WTC11 (cell line): ENCODE measurements at regions of chr12 and their contacts with region 1.

Region 1: GRCh38 chr12:53159195-53159839 is 21.2 kb upstream of the ZNF740 start:
- DNase-seq: peak; percentile 95
- ATAC-seq: peak; percentile 95
- H3K4me3 Mint-ChIP-seq: peak overlapping the region; percentile 50
- H3K27ac Mint-ChIP-seq: no peak overlapping the region
- H3K4me1 Mint-ChIP-seq: peaks cover 5% of the 10 kb centered on the region
- H3K27me3 Mint-ChIP-seq: peaks cover 63% of the 10 kb centered on the region
- CTCF ChIP-seq: peak; percentile 97

Region 2: DNA sequence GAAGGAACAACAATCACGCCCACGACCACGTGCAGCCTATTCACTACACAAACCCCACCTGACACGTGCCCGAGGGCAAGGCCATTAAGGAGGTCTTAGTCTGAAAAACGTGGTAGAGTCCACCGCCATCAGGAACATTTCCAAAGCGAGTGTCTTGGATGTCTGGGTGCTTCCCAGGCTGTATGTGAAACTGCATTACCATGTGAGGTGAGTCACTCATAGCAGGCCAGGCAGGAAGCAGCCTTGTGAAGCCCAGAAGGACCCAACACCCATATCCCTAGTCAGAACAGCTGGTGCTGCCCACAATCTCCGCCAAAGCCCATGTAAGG is 321.9 kb before region 1 on chr12:
- CTCF ChIA-PET with region 1: no interaction called
- POLR2A ChIA-PET with region 1: no interaction called
- DNase-seq: no peak
- ATAC-seq: no peak
- H3K4me3 Mint-ChIP-seq: no peak overlapping the region
- H3K27ac Mint-ChIP-seq: no peak overlapping the region
- H3K4me1 Mint-ChIP-seq: no peaks in the 10 kb centered on the region
- H3K27me3 Mint-ChIP-seq: peaks cover 5% of the 10 kb centered on the region; the same call in 1 of the 2 replicates
- CTCF ChIP-seq: no peak

Region 3: DNA sequence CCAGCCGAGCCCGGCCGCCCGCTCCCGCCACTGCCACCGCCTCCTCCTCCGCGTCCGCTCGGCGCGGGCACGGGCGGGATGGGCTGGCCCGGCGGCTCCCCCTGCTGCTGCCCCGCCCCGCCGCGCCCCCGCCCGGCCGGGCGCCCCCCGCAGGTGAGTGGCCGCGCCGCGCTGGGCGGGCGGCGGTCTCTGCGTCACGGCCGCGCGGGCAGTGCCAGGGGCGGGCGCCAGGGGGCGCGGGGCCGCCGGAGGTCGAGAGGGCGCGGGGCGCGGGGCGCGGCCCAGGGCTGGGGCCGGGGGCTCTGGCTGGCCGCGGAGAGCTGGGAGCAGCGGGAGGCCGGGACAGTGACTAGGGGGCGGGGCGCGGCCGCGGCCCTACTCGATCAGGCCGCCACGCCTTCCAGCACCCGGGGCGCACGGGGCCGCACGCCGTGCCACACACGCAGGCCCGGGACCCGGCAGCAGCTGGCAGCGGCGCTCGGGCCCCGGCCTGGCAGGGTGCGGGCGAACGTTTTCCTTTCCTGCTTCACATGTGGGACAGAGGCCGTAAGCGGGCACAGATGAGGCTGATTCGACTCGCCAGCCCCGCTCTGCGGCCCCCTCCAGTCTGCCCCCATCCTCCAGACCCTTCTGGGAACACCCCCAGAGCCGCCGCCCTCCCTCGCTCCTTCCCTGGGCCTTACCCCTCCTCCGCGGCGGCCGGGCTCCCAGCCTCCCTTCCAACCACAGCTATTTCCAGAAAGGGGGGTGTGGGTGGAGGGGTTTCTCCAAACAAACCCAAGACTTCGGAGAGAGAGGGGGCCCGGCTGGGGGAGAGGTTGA is 111.9 kb before region 1 on chr12:
- CTCF ChIA-PET with region 1: interaction called, 11 read pairs
- POLR2A ChIA-PET with region 1: no interaction called
- DNase-seq: peak; percentile 81
- ATAC-seq: peak; percentile 27
- H3K4me3 Mint-ChIP-seq: peak overlapping the region; percentile 62
- H3K27ac Mint-ChIP-seq: no peak overlapping the region
- H3K4me1 Mint-ChIP-seq: peaks cover 80% of the 10 kb centered on the region
- H3K27me3 Mint-ChIP-seq: peaks cover 40% of the 10 kb centered on the region
- CTCF ChIP-seq: peak; percentile 41; the same call in 1 of the 2 replicates

Region 4: GRCh38 chr12:53071591-53072551 is 87.4 kb before region 1 on chr12:
- CTCF ChIA-PET with region 1: interaction called, 52 read pairs
- POLR2A ChIA-PET with region 1: no interaction called
- DNase-seq: no peak
- ATAC-seq: no peak
- H3K4me3 Mint-ChIP-seq: no peak overlapping the region
- H3K27ac Mint-ChIP-seq: no peak overlapping the region
- H3K4me1 Mint-ChIP-seq: peaks cover 28% of the 10 kb centered on the region
- H3K27me3 Mint-ChIP-seq: no peaks in the 10 kb centered on the region; the same call in none of the 2 replicates
- CTCF ChIP-seq: no peak

Region 5: GRCh38 chr12:53145383-53146260 is 13.7 kb before region 1 on chr12:
- CTCF ChIA-PET with region 1: interaction called, 10 read pairs
- POLR2A ChIA-PET with region 1: interaction called, 4 read pairs
- DNase-seq: no peak
- ATAC-seq: no peak
- H3K4me3 Mint-ChIP-seq: no peak overlapping the region
- H3K27ac Mint-ChIP-seq: no peak overlapping the region
- H3K4me1 Mint-ChIP-seq: peaks cover 3% of the 10 kb centered on the region; the same call in 1 of the 2 replicates
- H3K27me3 Mint-ChIP-seq: peaks cover 15% of the 10 kb centered on the region
- CTCF ChIP-seq: no peak

Region 6: DNA sequence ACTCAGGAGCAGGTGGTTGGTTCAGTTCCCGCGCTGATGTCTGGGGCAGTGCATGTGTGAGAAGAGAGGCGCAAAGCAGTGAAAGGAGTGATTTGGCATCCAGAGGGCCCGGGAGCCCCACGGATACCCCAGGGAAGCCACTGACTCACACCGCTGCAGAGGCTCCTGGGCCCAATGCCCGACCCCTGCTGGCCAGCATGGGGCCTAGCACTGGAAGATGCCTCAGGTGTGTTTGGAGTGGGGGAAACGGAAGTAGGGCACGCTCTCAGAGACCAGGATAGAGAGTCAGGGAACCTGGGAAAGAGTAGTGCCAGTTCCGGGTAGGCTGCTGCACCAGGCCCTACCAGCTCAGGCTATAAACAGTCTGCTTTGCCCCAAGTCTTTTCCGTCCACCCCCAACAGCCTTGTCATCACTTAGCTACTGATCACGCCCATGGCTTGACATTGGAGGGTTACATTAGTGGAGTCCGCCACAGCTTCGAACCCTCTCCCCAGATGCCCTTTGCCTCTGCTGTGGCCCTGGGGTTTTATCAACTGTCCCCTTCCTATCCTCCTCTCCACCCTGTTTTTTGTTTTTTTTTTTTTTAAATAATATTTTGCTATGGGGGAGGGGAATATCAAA is 30.9 kb after region 1 on chr12:
- CTCF ChIA-PET with region 1: interaction called, 41 read pairs
- POLR2A ChIA-PET with region 1: no interaction called
- DNase-seq: peak; percentile 78
- ATAC-seq: peak; percentile 97
- H3K4me3 Mint-ChIP-seq: no peak overlapping the region
- H3K27ac Mint-ChIP-seq: no peak overlapping the region
- H3K4me1 Mint-ChIP-seq: peaks cover 16% of the 10 kb centered on the region
- H3K27me3 Mint-ChIP-seq: peaks cover 35% of the 10 kb centered on the region
- CTCF ChIP-seq: peak; percentile 53; the same call in 1 of the 2 replicates

Region 7: DNA sequence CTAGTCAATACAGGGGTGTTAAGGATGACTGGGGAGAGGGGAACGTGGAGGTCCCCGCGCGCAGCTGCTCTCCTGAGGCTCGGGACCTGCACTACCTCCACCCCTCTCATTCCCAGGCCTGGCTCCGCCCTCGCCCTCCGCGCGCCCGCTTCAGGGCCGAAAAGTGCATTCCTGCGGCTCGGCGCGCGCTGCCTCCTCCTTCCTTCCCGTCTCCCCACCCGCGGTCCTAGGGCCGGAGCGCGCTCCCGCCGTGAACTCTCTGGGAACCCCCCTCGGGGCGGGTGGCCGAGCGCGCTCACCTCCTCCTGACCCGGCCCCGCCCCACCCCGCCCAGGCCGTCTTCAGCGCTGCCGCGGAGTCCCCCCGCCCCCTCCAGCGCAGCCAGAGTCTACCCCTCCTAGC is 61.5 kb after region 1 on chr12:
- CTCF ChIA-PET with region 1: interaction called, 39 read pairs
- POLR2A ChIA-PET with region 1: no interaction called
- DNase-seq: peak; percentile 94
- ATAC-seq: peak; percentile 38
- H3K4me3 Mint-ChIP-seq: peak overlapping the region; percentile 90
- H3K27ac Mint-ChIP-seq: peak overlapping the region; percentile 98
- H3K4me1 Mint-ChIP-seq: peaks cover 75% of the 10 kb centered on the region
- H3K27me3 Mint-ChIP-seq: peaks cover 7% of the 10 kb centered on the region; the same call in 1 of the 2 replicates
- CTCF ChIP-seq: no peak

Region 8: GRCh38 chr12:53465679-53466078 is 306.4 kb after region 1 on chr12:
- CTCF ChIA-PET with region 1: no interaction called
- POLR2A ChIA-PET with region 1: interaction called, 11 read pairs
- DNase-seq: no peak
- ATAC-seq: no peak
- H3K4me3 Mint-ChIP-seq: no peak overlapping the region
- H3K27ac Mint-ChIP-seq: no peak overlapping the region
- H3K4me1 Mint-ChIP-seq: peaks cover 26% of the 10 kb centered on the region
- H3K27me3 Mint-ChIP-seq: no peaks in the 10 kb centered on the region
- CTCF ChIP-seq: no peak